ENCODE measurements at regions of chr20 and their contacts with region 1.

Region 1: DNA sequence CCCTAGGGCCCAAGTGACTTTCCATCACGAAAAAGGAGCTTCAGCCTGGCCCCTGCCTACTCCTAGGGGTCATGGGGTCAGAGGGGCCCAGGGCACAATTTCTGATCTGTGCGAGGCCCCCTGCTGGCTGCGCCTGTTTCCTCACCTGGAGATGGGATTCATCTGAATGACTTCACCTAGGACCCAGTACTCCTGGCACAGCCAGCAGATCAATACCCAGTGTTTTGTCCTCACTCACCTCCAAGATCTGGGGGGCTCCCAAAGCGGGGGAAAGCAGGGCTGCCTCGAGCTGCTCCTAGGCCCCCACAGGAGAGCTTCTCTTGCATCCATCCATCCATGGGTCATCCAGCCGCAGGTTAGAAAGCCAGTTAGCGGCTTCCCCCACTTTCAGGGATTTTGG is 33.8 kb downstream of the CD40 start:
- DNase-seq: peak in 1 of 2 experiments; percentile 82
- H3K4me3 ChIP-seq: no peak overlapping the region
- H3K27ac ChIP-seq: no peak overlapping the region
- H3K4me1 ChIP-seq: peaks cover 0 to 5% (median 0%) of the 10 kb centered on the region in 4 experiments; a peak in 2 of 7 replicates
- H3K27me3 ChIP-seq: no peaks in the 10 kb centered on the region
- CTCF ChIP-seq: peak; percentile 57 to 67 (median 66)
- EP300 ChIP-seq: no peak
- POLR2A ChIP-seq: no peak
- RAD21 ChIP-seq: peak; percentile 28 to 52; a peak in 3 of 4 replicates

Region 2: DNA sequence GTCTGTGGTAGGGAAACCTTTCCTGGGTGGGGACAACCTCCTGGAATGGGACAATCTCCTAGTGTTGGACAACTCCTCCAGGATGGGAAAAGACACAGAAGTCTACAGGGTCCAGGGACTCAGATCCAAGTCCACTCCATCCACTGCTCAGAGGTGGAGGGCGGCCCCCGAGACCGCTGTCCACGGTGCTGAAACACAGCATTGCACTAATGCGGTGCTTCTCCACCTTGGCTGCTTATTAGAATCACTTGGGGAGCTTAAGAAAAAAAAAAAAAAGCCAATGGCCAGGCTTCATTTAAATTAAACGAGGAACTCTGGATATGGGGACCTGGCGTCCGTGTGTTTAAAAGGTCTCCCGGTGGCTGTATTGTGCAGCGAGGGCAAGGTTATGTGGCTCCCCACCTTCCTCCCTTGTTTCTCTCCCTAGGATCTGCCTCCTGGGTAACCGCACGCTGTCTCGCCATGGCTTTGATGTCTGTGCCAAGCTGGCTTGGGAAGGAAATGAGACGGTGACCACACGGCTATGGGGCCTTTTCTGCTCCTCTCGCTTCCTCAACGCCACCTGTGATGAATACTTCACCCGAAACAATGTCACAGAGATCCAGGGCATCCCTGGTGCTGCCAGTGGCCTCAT is 110.9 kb before region 1 on chr20:
- CTCF ChIA-PET with region 1: no interaction called
- POLR2A ChIA-PET with region 1: no interaction called
- DNase-seq: peak in 1 of 2 experiments; percentile 93
- H3K4me3 ChIP-seq: no peak overlapping the region
- H3K27ac ChIP-seq: no peak overlapping the region
- H3K4me1 ChIP-seq: peaks cover 0 to 7% (median 3%) of the 10 kb centered on the region in 4 experiments; a peak in 3 of 7 replicates
- H3K27me3 ChIP-seq: peaks cover 0 to 7% (median 2%) of the 10 kb centered on the region in 4 experiments; a peak in 3 of 7 replicates
- CTCF ChIP-seq: no peak
- EP300 ChIP-seq: no peak
- POLR2A ChIP-seq: no peak
- RAD21 ChIP-seq: no peak

Region 3: GRCh38 chr20:46139908-46140482 is 11.9 kb before region 1 on chr20:
- CTCF ChIA-PET with region 1: interaction called, 13 read pairs
- POLR2A ChIA-PET with region 1: interaction called, 4 read pairs
- DNase-seq: no peak
- H3K4me3 ChIP-seq: no peak overlapping the region
- H3K27ac ChIP-seq: no peak overlapping the region
- H3K4me1 ChIP-seq: peaks cover 3 to 18% (median 11%) of the 10 kb centered on the region in 4 experiments
- H3K27me3 ChIP-seq: no peaks in the 10 kb centered on the region
- CTCF ChIP-seq: no peak
- EP300 ChIP-seq: no peak
- POLR2A ChIP-seq: no peak
- RAD21 ChIP-seq: no peak

Region 4: DNA sequence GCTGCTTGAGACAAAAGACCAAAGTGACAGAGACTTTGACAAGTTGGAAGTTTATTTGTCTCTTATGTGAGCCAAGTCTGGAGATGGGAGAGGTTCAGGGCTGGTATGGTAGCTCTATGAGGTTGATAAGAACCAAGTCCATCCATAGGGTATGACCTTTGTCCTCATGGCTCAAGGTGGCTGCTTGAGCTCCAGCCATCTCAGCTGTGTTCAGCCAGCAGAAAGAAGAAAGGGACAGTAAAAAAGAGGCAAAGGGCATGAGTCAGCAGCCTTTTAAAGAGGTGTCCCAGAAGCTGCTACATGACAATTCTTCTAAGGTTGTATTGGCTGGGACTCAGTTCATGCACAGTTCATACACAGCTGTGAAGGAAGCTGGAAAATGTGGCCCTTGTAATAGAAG is 15.1 kb after region 1 on chr20:
- CTCF ChIA-PET with region 1: interaction called, 233 read pairs
- POLR2A ChIA-PET with region 1: no interaction called
- DNase-seq: no peak
- H3K4me3 ChIP-seq: no peak overlapping the region
- H3K27ac ChIP-seq: no peak overlapping the region
- H3K4me1 ChIP-seq: no peaks in the 10 kb centered on the region
- H3K27me3 ChIP-seq: peaks cover 0 to 3% (median 2%) of the 10 kb centered on the region in 4 experiments; a peak in 2 of 7 replicates
- CTCF ChIP-seq: no peak
- EP300 ChIP-seq: no peak
- POLR2A ChIP-seq: no peak
- RAD21 ChIP-seq: no peak